Activated T-helper 1 cell treated with anti-CD3 and anti-CD28 coated beads, Interleukin-12 subunit alpha, Interleukin-12 subunit beta, Interleukin-2, Interleukin-4 antibody, amounts not matched to agents 30 ng/mL and 10 ng/mL and 1 ng/mL, durations not matched to agents 14 hours and 24 hours and 36 hours (primary cell): ENCODE measurements at regions of chr5 and their contacts with region 1.

Region 1: DNA sequence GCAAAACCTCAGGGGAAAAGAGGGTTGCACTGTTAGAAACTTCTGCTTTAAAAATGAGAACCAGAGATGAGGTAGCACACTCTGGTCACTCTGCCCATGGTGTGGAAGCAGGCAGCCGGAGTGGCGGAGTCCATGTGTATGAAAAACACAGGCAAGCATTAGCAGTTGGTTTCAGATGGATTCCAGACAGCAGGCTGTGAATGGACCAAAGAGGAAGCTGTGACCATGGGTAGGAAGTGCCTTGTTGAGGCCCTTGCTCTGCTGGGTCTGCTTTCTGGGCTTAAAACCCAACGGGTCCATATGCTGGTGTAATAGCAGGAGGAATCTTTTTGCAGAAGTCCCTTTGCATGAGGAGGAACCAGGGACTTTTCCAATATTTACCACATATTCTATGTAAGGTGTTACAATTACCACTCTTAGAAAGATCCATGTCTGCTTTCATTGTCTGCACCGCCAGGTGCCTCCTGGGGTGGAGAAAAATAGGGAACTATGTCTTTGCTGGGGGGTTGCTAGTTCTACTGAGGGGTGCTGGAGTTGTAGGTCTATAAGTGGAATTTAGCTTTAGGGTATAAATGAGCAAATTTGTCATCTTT is 77.0 kb downstream of the ANKRD55 start:
- DNase-seq: no peak
- H3K4me3 Mint-ChIP-seq: peak overlapping the region; percentile 25
- H3K27ac Mint-ChIP-seq: peak overlapping the region; percentile 97
- H3K4me1 Mint-ChIP-seq: peaks cover 88% of the 10 kb centered on the region
- H3K27me3 Mint-ChIP-seq: no peaks in the 10 kb centered on the region

Region 2: DNA sequence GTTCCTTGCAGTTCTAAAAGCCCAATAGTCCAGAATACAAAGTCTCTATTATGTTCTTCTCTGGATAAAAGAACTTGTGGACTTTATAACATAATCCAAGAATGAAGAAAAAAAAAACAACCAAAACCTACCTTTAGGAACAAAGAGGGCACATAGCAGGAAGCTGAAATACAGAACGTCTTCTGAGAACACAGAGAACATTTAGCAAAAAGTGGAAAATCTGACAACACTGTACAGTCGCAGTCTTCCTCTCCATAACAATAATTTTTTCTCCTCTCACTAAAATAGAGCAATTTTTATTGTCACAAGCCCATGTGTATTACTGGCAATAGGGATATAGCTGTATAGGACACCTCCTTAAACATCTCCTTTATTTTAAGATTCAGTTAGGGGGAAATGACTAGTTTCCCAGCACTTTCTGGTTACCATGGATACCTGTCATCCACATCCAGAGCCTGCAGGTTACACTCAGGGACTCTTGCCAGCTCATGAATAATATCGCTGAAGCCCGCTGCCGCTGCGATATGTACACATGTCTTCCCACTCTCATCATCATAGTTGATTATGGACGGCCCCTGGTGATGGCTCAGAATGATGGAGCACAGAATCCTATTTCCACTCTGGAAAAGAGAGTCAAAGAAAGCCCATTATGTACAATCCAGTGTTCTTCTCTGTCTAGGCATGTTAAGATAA is 29.5 kb before region 1 on chr5:
- intact Hi-C with region 1: loop called (anchors 1 kb)
- DNase-seq: no peak
- H3K4me3 Mint-ChIP-seq: peak overlapping the region; percentile 76
- H3K27ac Mint-ChIP-seq: peak overlapping the region; percentile 94
- H3K4me1 Mint-ChIP-seq: peaks cover 40% of the 10 kb centered on the region
- H3K27me3 Mint-ChIP-seq: no peaks in the 10 kb centered on the region

Region 3: GRCh38 chr5:56168066-56168478 is 12.0 kb after region 1 on chr5:
- intact Hi-C with region 1: loop called (anchors 1 kb)
- DNase-seq: no peak
- H3K4me3 Mint-ChIP-seq: no peak overlapping the region
- H3K27ac Mint-ChIP-seq: no peak overlapping the region
- H3K4me1 Mint-ChIP-seq: peaks cover 61% of the 10 kb centered on the region
- H3K27me3 Mint-ChIP-seq: peaks cover 3% of the 10 kb centered on the region

Region 4: GRCh38 chr5:56259002-56259511 is 103.0 kb after region 1 on chr5:
- intact Hi-C with region 1: loop called (anchors 5 kb)
- DNase-seq: no peak
- H3K4me3 Mint-ChIP-seq: no peak overlapping the region
- H3K27ac Mint-ChIP-seq: no peak overlapping the region
- H3K4me1 Mint-ChIP-seq: no peaks in the 10 kb centered on the region
- H3K27me3 Mint-ChIP-seq: peaks cover 14% of the 10 kb centered on the region